Left cardiac atrium (tissue), 4 donors: ENCODE measurements at regions of chr6 and their contacts with region 1.

Region 1: GRCh38 chr6:25556516-25556915 is 95.5 kb upstream of the SCGN start:
- DNase-seq: peak; percentile 84
- ATAC-seq: peak; percentile 44 to 57

Region 2: DNA sequence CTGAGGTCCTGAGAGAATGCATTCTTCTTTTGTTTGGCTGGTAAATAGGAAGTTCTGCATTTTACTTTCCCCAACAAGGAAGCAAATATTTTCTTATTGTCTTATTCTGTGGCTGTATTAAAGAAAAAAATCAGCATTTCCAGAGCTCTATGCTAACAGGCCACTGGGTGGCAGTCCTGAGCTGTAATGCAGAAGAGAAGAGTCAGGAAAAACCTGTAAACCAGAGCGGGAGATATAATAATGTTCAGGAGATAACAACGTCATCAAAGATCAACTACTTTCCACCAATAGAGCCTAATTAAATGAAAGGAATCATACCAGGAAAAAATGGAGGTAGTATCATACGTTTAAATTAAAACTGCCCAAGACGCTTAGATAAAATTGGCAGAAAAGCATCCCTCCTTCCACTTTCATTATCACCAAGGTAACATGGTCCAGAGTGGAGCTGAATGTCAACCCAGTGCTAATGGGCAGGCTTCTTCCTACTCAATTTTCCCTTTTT is 333.0 kb before region 1 on chr6:
- intact Hi-C with region 1: loop called in 1 of 2 experiments (anchors 5 kb)
- DNase-seq: peak; percentile 70
- ATAC-seq: peak in 1 of 2 donors; percentile 67

Region 3: GRCh38 chr6:25229671-25230321 is 326.7 kb before region 1 on chr6:
- intact Hi-C with region 1: loop called (anchors 5 to 10 kb)
- DNase-seq: no peak
- ATAC-seq: peak in 1 of 2 donors; percentile 72

Region 4: GRCh38 chr6:25263657-25264056 is 292.9 kb before region 1 on chr6:
- intact Hi-C with region 1: loop called in 1 of 2 experiments (anchors 2 kb)
- DNase-seq: no peak
- ATAC-seq: peak in 1 of 2 donors; percentile 64